ENCODE measurements at regions of chr10 and their contacts with region 1.

Region 1: DNA sequence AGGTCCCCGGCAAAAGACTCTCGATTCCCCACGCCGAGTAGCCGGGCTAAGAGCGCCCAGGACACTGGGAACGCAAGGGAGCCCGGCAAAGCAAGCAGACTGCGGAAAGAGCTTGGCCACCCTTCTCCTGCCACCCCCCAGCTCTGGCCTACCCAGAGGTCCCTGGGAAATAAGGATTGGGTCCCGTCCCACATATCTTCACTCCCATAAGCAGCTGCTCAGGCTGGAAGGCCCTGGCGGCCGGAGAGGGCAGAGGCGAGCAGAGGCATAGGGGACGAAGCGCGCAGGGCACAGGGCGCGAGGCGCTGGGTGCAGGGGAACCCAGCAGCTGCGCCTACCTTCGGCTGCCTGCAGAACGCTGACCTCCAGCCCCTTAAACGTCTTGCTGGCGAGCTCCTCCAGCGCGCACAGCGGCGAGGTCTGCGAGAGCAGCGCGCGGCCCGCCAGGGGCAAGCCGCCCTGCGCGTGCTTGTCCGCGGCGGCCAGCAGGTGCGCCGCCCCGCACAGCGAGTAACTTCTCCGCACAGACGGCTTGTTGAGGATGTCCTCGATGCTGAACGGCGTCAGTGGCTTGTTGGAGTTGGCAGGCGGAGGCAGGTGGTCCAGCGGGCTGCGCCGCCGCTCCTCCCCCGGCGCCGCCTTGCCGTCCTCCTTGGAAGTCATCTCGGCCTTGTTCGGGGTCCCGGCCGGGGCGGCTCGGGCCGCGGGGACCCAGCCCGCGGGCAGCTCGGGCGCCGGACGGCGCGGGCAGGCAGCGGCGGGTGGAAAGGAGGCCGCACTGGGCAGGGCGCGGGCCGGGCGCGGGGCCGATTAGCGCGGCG is 900 bp downstream of the LBX1 start:
- DNase-seq: peak; percentile 47 to 86
- ATAC-seq: peak; percentile 59 to 70 (median 61)
- H3K4me3 ChIP-seq: peak overlapping the region; percentile 86
- H3K27ac ChIP-seq: peak overlapping the region; percentile 96
- H3K4me1 ChIP-seq: peaks cover 21% of the 10 kb centered on the region
- H3K27me3 ChIP-seq: peaks cover 0 to 52% (median 3%) of the 10 kb centered on the region in 3 donors
- CTCF ChIP-seq: peak; percentile 31

Region 2: DNA sequence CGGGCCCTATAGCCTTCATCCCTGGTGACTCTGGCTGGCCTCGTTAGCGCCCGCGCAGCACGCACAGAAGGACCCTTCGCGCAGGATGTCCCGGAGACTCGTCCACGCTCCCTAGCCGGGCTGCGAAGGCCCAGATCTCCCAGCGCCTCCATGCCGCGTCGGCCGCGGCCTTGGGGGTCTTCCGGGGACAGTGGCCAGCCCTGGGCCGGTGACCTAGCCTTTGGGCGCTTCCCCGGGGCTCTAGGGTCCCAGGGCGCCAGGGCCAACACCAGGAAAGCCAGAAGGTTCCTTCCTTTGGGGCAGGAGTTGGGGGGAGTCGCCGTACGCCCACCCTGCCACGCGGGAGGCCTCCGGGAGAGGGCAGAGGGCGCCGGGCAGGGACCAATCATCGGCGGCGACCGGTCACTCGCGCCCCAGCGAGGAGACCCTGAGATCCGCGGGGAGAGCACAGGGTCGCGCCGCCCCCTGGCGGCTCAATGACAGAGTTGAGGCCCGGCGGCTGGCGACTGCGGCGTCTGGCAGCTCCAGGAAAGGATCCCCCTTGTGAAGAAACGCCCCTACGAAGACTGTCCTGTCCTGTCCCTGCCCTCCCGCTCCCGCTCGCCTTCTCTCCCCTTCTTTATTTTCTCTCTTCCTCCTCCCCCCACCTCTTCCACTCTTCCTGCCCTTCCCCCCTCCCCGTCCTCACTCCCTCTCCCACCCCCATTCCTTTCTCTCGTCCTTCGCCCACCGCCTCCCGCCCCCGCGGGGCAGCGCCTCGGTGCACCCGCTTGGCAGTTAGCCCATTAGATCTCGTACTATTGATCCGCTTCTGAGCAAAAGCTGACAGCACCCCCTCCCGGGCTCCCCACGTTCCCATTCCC is 63.2 kb after region 1 on chr10:
- intact Hi-C with region 1: loop called in 1 of 2 experiments (anchors 5 kb)
- DNase-seq: peak; percentile 71 to 89
- ATAC-seq: peak; percentile 88 to 92 (median 90)
- H3K4me3 ChIP-seq: peak overlapping the region; percentile 81
- H3K27ac ChIP-seq: peak overlapping the region; percentile 88
- H3K4me1 ChIP-seq: peaks cover 16% of the 10 kb centered on the region
- H3K27me3 ChIP-seq: peaks cover 0 to 17% (median 0%) of the 10 kb centered on the region in 3 donors
- CTCF ChIP-seq: peak; percentile 71

Region 3: GRCh38 chr10:101485681-101486554 is 257.6 kb after region 1 on chr10:
- intact Hi-C with region 1: loop called in 1 of 2 experiments (anchors 2 kb)
- DNase-seq: peak in 1 of 2 donors; percentile 17
- ATAC-seq: peak; percentile 84 to 93 (median 88)
- H3K4me3 ChIP-seq: peak overlapping the region; percentile 66
- H3K27ac ChIP-seq: peak overlapping the region; percentile 78
- H3K4me1 ChIP-seq: peaks cover 52% of the 10 kb centered on the region
- H3K27me3 ChIP-seq: no peaks in the 10 kb centered on the region
- CTCF ChIP-seq: no peak